ENCODE measurements at regions of chr7 and their contacts with region 1.

Region 1: GRCh38 chr7:134355927-134356326 is 39.2 kb upstream of the SLC35B4 start:
- DNase-seq: peak in 1 of 2 experiments; percentile 51
- ATAC-seq: peak in 1 of 2 experiments; percentile 24; a peak in 4 of 6 replicates
- H3K4me3 ChIP-seq: no peak overlapping the region
- H3K27ac ChIP-seq: peak overlapping the region; percentile 56 to 60; a peak in 5 of 6 replicates
- H3K4me1 ChIP-seq: peaks cover 23% of the 10 kb centered on the region
- CTCF ChIP-seq: no peak
- EP300 ChIP-seq: no peak; a peak in 1 of 5 replicates
- POLR2A ChIP-seq: no peak
- RAD21 ChIP-seq: no peak

Region 2: DNA sequence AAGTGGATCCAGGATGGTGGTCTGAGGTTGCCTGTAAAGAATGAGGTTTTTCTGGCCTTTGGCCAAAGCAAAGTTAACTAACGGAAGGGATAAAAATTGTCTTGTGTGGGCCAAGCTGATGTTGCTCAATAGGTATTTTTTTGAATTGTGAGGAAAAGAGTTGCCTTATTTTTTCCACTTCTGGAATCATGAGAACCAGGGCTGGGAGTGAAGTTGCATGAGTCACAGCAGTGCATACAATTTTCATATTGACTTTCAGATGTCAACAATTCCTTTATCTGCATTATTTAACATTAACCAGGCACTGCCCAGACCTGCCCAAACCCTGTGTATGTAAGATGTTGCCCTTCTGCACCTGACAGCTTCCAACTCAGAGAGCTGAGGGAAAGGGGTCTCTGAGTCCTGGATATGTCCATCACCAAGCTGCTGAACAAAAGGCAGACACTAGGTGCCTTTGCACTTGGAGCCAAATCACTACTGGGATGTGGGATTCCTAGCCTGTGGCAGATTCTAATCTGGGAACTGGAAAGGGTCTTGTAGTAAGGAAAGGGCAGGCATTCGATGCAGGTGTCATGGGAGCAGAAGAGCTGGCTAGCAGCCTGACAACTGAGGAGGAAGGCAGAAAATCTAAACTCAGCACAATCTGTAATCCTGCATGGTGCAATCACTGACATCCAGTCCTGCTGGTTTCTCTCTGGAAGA is 13.1 kb after region 1 on chr7:
- CTCF ChIA-PET with region 1: interaction called, 18 read pairs
- POLR2A ChIA-PET with region 1: interaction called, 4 read pairs
- DNase-seq: peak; percentile 81 to 97
- ATAC-seq: peak; percentile 45 to 81
- H3K4me3 ChIP-seq: no peak overlapping the region
- H3K27ac ChIP-seq: peak overlapping the region; percentile 89 to 90
- H3K4me1 ChIP-seq: peaks cover 61% of the 10 kb centered on the region
- CTCF ChIP-seq: no peak
- EP300 ChIP-seq: peak; percentile 96 to 97
- POLR2A ChIP-seq: no peak
- RAD21 ChIP-seq: peak in 1 of 2 experiments; percentile 69; a peak in 4 of 5 replicates

Region 3: GRCh38 chr7:134374291-134374690 is 18.4 kb after region 1 on chr7:
- CTCF ChIA-PET with region 1: interaction called, 12 read pairs
- POLR2A ChIA-PET with region 1: no interaction called
- DNase-seq: no peak
- ATAC-seq: peak in 1 of 2 experiments; percentile 25; a peak in 1 of 6 replicates
- H3K4me3 ChIP-seq: no peak overlapping the region
- H3K27ac ChIP-seq: peak overlapping the region; percentile 8 to 45; a peak in 4 of 6 replicates
- H3K4me1 ChIP-seq: peaks cover 19% of the 10 kb centered on the region
- CTCF ChIP-seq: no peak
- EP300 ChIP-seq: no peak
- POLR2A ChIP-seq: no peak
- RAD21 ChIP-seq: no peak

Region 4: DNA sequence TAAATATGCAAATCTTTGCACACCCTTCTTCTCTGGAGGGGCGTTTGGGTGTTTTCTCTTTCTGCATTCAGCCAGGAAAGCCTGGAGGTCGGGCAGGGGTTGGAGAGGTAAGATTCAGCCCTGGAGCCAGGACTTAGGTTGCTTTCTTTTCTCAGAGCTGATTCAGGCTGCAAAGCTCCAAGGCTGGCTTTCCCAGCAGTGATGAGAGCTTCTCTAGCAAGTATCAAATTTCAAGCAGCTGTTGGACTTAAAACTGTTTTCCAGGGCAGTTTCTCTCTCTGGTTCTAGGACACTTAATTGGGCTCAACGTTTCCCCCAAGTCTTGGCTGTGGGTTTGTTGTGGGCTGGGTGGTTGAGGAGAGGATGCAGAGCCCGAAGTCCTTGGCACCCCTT is 172.0 kb after region 1 on chr7:
- CTCF ChIA-PET with region 1: no interaction called
- POLR2A ChIA-PET with region 1: no interaction called
- DNase-seq: no peak
- ATAC-seq: peak in 1 of 2 experiments; percentile 9; a peak in 4 of 6 replicates
- H3K4me3 ChIP-seq: peak overlapping the region; percentile 84
- H3K27ac ChIP-seq: peak overlapping the region; percentile 91 to 98
- H3K4me1 ChIP-seq: peaks cover 54% of the 10 kb centered on the region
- CTCF ChIP-seq: no peak
- EP300 ChIP-seq: no peak
- POLR2A ChIP-seq: no peak; the same call in 1 of the 2 replicates
- RAD21 ChIP-seq: no peak

Region 5: GRCh38 chr7:134920026-134920753 is 564.3 kb after region 1 on chr7:
- CTCF ChIA-PET with region 1: no interaction called
- POLR2A ChIA-PET with region 1: no interaction called
- DNase-seq: peak; percentile 38 to 45
- ATAC-seq: peak in 1 of 2 experiments; percentile 89; a peak in 3 of 6 replicates
- H3K4me3 ChIP-seq: no peak overlapping the region; the same call in 2 of the 3 replicates
- H3K27ac ChIP-seq: peak overlapping the region; percentile 71 to 74; a peak in 5 of 6 replicates
- H3K4me1 ChIP-seq: peaks cover 39% of the 10 kb centered on the region
- CTCF ChIP-seq: no peak
- EP300 ChIP-seq: no peak; a peak in 1 of 5 replicates
- POLR2A ChIP-seq: no peak
- RAD21 ChIP-seq: no peak; a peak in 1 of 5 replicates